IMR-90 (cell line): ENCODE measurements at regions of chr2 and their contacts with region 1.

Region 1: DNA sequence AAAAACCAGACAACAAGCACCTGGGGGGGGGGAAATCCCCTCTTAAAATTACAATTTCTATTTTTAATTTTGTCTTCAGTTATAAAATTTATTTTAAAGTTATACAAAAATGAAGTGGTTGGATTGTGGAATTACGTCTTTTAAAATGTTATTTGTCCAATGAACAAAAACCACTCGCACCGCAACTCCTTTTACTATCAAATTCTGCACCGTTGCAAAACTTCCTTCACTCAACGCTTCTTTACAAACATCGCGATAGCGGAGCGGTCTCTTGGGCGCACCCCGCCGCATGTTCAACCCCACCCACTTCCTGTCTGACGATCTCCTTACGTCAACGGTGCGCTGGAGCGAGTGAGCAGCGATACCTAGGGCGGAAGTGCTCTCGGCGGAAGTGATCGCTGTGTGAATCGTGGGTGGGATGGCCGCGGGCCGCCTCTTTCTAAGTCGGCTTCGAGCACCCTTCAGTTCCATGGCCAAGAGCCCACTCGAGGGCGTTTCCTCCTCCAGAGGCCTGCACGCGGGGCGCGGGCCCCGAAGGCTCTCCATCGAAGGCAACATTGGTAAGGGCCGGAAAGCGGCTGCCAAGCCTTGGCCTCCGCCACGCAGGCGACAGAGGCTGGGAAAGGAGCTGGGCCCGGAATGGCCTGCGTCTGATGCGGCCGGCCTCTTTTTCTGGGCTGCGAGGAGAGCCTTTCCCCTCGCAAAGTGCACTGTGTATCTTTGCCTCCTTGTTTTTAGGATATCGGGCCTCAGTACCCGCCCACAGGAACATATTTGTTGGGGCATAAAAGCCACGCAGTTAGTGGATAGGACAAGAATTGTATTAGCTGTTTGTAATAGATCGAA is at the start of gene DGUOK:
- DNase-seq: peak; percentile 100
- ATAC-seq: peak; percentile 97
- H3K4me3 ChIP-seq: peak within 1 kb of the TSS; percentile 76
- H3K27ac ChIP-seq: peak within 1 kb of the TSS; percentile 96
- H3K4me1 ChIP-seq: peaks cover 2% of the 10 kb centered on the region
- H3K27me3 ChIP-seq: no peaks in the 10 kb centered on the region
- CTCF ChIP-seq: no peak
- POLR2A ChIP-seq: peak; percentile 94
- RAD21 ChIP-seq: no peak
- total RNA-seq, gene DGUOK: 57.2 and 66.3 TPM in 2 replicates

Region 2: GRCh38 chr2:73836141-73836949 is 90.4 kb before region 1 on chr2:
- CTCF ChIA-PET with region 1: no interaction called
- POLR2A ChIA-PET with region 1: no interaction called
- dilution Hi-C with region 1: no loop called
- in situ Hi-C with region 1: no loop called
- intact Hi-C with region 1: no loop called
- DNase-seq: no peak
- ATAC-seq: no peak
- H3K4me3 ChIP-seq: no peak overlapping the region
- H3K27ac ChIP-seq: no peak overlapping the region
- H3K4me1 ChIP-seq: peaks cover 2% of the 10 kb centered on the region; the same call in 1 of the 2 replicates
- H3K27me3 ChIP-seq: no peaks in the 10 kb centered on the region
- CTCF ChIP-seq: no peak
- POLR2A ChIP-seq: no peak
- RAD21 ChIP-seq: no peak

Region 3: GRCh38 chr2:73985308-73986084 is 58.8 kb after region 1 on chr2:
- CTCF ChIA-PET with region 1: no interaction called
- POLR2A ChIA-PET with region 1: no interaction called
- dilution Hi-C with region 1: no loop called
- in situ Hi-C with region 1: no loop called
- intact Hi-C with region 1: loop called (anchors 5 kb)
- DNase-seq: no peak
- ATAC-seq: peak; percentile 48
- H3K4me3 ChIP-seq: peak overlapping the region; percentile 47
- H3K27ac ChIP-seq: peak overlapping the region; percentile 18
- H3K4me1 ChIP-seq: peaks cover 24% of the 10 kb centered on the region
- H3K27me3 ChIP-seq: no peaks in the 10 kb centered on the region
- CTCF ChIP-seq: no peak
- POLR2A ChIP-seq: no peak
- RAD21 ChIP-seq: no peak

Region 4: DNA sequence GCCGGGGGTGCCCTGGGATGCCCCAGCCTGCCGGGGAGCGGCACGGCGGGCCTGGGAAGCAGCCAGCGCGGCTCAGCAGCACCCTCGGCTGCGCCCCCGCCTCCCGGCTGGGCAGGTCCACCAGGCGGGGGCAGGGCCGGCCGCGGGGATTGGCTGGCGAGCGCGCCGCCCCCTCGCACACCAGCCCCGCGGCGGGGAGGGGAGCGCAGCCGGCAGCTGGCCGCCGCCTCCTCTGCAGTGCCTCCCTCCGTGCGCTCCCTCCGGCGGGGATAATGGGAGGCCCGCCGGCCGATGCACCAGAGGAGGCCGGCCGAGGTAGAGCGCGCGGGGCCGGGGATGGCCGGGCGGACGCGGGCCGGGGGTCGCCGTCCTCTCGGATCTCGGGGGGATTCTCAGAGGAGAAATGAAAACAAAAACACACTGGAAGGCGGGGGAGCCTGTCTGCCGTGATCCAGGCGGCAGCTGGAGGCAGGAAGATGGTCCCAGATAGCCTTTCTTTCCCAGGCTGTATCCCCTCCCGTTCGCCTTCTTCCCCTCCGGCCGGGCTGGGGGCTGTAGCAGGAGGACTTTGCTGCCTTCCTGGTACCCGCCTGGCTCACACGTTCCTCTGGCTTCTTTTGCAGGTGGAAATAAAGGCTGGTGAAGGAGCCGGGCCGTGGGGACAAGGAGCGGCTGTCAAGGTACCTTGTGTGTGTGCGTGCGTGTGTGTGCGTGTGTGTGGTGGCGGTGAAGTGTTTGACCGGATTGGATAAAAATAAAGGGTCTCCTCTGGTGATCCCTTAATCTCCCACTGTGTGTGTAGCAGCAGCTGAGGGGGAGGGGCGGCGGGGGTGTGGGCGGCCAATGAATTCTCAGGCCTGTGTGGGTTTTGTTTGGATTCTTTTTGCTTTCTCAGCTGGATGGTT is 76.0 kb after region 1 on chr2:
- CTCF ChIA-PET with region 1: no interaction called
- POLR2A ChIA-PET with region 1: no interaction called
- dilution Hi-C with region 1: no loop called
- in situ Hi-C with region 1: no loop called
- intact Hi-C with region 1: loop called (anchors 5 kb)
- DNase-seq: peak; percentile 83
- ATAC-seq: peak; percentile 94
- H3K4me3 ChIP-seq: peak overlapping the region; percentile 82
- H3K27ac ChIP-seq: peak overlapping the region; percentile 77
- H3K4me1 ChIP-seq: peaks cover 33% of the 10 kb centered on the region
- H3K27me3 ChIP-seq: no peaks in the 10 kb centered on the region
- CTCF ChIP-seq: no peak
- POLR2A ChIP-seq: peak; percentile 86
- RAD21 ChIP-seq: no peak; the same call in 1 of the 2 replicates

Region 5: GRCh38 chr2:74147727-74148456 is 221.2 kb after region 1 on chr2 and contains the start of gene BOLA3:
- CTCF ChIA-PET with region 1: interaction called, 3 read pairs
- POLR2A ChIA-PET with region 1: no interaction called
- dilution Hi-C with region 1: no loop called
- in situ Hi-C with region 1: loop called (anchors 10 kb)
- intact Hi-C with region 1: loop called (anchors 1 kb)
- DNase-seq: peak; percentile 55
- ATAC-seq: peak; percentile 97
- H3K4me3 ChIP-seq: peak within 1 kb of the TSS; percentile 68
- H3K27ac ChIP-seq: peak within 1 kb of the TSS; percentile 54
- H3K4me1 ChIP-seq: peaks cover 11% of the 10 kb centered on the region
- H3K27me3 ChIP-seq: no peaks in the 10 kb centered on the region
- CTCF ChIP-seq: peak; percentile 69
- POLR2A ChIP-seq: peak; percentile 4
- RAD21 ChIP-seq: peak; percentile 58
- total RNA-seq, gene BOLA3: 13.3 and 36.4 TPM in 2 replicates

Region 6: GRCh38 chr2:74391580-74392448 is 465.1 kb after region 1 on chr2:
- CTCF ChIA-PET with region 1: no interaction called
- POLR2A ChIA-PET with region 1: no interaction called
- dilution Hi-C with region 1: no loop called
- in situ Hi-C with region 1: no loop called
- intact Hi-C with region 1: loop called (anchors 10 kb)
- DNase-seq: peak; percentile 85
- ATAC-seq: peak; percentile 92
- H3K4me3 ChIP-seq: peak overlapping the region; percentile 83
- H3K27ac ChIP-seq: peak overlapping the region; percentile 95
- H3K4me1 ChIP-seq: peaks cover 9% of the 10 kb centered on the region
- H3K27me3 ChIP-seq: peaks cover 4% of the 10 kb centered on the region
- CTCF ChIP-seq: peak; percentile 96
- POLR2A ChIP-seq: peak; percentile 38; the same call in 1 of the 2 replicates
- RAD21 ChIP-seq: peak; percentile 66